Right cardiac atrium (tissue), 5 donors: ENCODE measurements at regions of chr3 and their contacts with region 1.

Region 1: DNA sequence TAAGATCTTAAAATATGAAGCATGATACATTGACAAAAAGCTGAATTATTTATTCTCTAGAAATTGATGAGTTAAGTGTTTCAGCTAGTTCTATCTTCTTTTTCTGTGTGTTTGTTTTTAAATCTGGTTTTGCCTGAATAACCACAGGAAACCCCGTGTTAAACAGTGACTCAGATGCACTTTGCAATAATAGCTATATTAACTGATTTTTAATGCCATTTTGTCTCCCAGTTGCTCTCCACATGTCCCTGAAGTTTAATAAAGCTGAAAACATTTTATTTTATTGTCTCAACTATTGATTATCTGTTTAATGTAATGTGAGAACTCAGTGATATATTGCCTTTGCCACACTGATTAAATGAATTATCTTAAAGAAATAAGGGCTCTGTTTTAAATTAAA is 42.8 kb upstream of the ROBO1 start:
- DNase-seq: no peak
- ATAC-seq: no peak
- H3K4me3 ChIP-seq: no peak overlapping the region
- H3K27ac ChIP-seq: no peak overlapping the region
- H3K4me1 ChIP-seq: no peaks in the 10 kb centered on the region
- H3K27me3 ChIP-seq: no peaks in the 10 kb centered on the region

Region 2: GRCh38 chr3:80068459-80068858 is 257.9 kb after region 1 on chr3:
- intact Hi-C with region 1: loop called in 1 of 4 experiments (anchors 5 kb)
- DNase-seq: no peak
- ATAC-seq: no peak
- H3K4me3 ChIP-seq: no peak overlapping the region
- H3K27ac ChIP-seq: no peak overlapping the region
- H3K4me1 ChIP-seq: no peaks in the 10 kb centered on the region
- H3K27me3 ChIP-seq: no peaks in the 10 kb centered on the region

Region 3: GRCh38 chr3:80606073-80606472 is 795.5 kb after region 1 on chr3:
- intact Hi-C with region 1: no loop called
- DNase-seq: no peak
- ATAC-seq: no peak
- H3K4me3 ChIP-seq: no peak overlapping the region
- H3K27ac ChIP-seq: no peak overlapping the region
- H3K4me1 ChIP-seq: no peaks in the 10 kb centered on the region
- H3K27me3 ChIP-seq: no peaks in the 10 kb centered on the region